Common myeloid progenitor, CD34-positive (primary cell): ENCODE measurements at regions of chr6 and their contacts with region 1.

Region 1: GRCh38 chr6:109705258-109705657 is 14.2 kb downstream of the FIG4 start:
- DNase-seq: peak; percentile 91 to 95 (median 92)
- H3K4me3 ChIP-seq: no peak overlapping the region
- H3K27ac ChIP-seq: no peak overlapping the region
- H3K4me1 ChIP-seq: peaks cover 0 to 16% (median 13%) of the 10 kb centered on the region in 4 experiments
- H3K27me3 ChIP-seq: no peaks in the 10 kb centered on the region

Region 2: DNA sequence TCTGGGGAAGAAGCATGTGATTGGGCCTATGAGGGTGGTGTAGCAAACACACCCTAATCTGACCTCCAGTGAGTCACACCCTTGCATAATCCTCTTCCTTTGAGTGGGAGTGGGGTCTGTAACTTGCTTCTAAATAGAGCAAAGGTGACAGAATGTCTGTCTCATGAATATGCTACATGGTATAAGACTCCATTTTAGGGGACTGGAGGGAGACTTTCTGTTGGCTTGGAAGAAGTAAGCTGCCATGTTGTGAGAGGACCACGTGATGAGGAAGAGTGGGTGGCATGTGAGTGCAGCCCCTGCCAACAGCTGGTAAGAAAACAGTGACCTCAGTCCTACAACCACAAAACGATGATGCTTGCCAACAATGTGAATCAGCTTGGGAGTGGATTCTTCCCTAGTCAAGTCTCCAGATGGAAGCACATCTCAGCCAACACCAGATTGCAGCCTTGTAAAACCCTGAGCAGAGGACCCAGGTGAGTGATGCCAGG is 17.9 kb before region 1 on chr6:
- CTCF ChIA-PET with region 1: interaction called, 10 read pairs
- POLR2A ChIA-PET with region 1: interaction called, 3 read pairs
- DNase-seq: peak in 1 of 3 donors; percentile 24
- H3K4me3 ChIP-seq: no peak overlapping the region
- H3K27ac ChIP-seq: no peak overlapping the region
- H3K4me1 ChIP-seq: peaks cover 4 to 25% (median 15%) of the 10 kb centered on the region in 4 experiments
- H3K27me3 ChIP-seq: no peaks in the 10 kb centered on the region

Region 3: GRCh38 chr6:109922799-109923198 is 217.5 kb after region 1 on chr6:
- CTCF ChIA-PET with region 1: no interaction called
- POLR2A ChIA-PET with region 1: no interaction called
- DNase-seq: no peak
- H3K4me3 ChIP-seq: no peak overlapping the region
- H3K27ac ChIP-seq: no peak overlapping the region
- H3K4me1 ChIP-seq: no peaks in the 10 kb centered on the region
- H3K27me3 ChIP-seq: peaks cover 0 to 2% (median 0%) of the 10 kb centered on the region in 5 experiments

Region 4: DNA sequence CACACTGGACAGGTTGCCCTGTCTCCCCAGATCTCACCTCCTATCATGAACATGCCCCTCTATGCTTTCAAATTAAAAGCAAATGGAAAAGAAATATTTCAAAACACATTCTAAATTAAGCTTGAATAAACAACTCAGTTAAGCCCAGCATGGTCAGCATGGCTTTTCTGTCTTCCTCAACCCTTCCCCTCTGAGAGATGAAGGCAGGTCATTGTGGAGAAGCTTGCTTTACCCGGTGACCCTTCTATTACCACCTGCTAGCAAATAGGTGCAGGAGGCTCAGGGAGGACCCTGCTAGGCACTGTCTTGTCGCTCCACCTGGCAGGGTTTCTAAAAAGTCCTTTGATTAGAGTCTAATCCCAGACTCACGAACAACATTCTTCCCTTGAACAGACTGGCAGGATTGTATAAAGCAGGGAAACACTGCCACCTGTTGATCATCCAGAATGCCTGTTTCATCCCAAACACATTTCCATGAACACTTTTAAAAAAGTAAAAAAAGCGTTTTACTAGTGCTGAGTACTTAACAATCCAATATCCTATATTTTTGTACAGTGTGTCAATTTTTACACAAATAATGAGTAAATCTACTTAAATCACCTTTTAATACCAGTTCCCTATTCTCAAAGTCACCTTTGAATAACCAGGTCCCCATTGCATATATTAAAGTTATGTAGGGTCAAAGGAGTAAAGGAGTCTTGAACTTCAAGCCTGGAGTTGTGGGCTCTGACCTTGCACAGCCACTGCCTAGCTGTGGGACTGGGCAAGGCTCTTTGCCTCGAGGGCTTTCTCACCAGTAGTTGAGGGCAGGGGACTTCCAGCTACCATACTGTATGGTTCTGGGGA is 348.4 kb after region 1 on chr6:
- CTCF ChIA-PET with region 1: interaction called, 13 read pairs
- POLR2A ChIA-PET with region 1: no interaction called
- DNase-seq: peak; percentile 52 to 73 (median 69)
- H3K4me3 ChIP-seq: no peak overlapping the region
- H3K27ac ChIP-seq: no peak overlapping the region
- H3K4me1 ChIP-seq: peaks cover 0 to 8% (median 3%) of the 10 kb centered on the region in 4 experiments
- H3K27me3 ChIP-seq: no peaks in the 10 kb centered on the region